CD8-positive, alpha-beta memory T cell (primary cell): ENCODE measurements at regions of chr1 and their contacts with region 1.

Region 1: GRCh38 chr1:16078925-16079656 is 5.6 kb upstream of the FAM131C start:
- DNase-seq: peak; percentile 63 to 81 (median 70)
- H3K4me3 ChIP-seq: peak overlapping the region; percentile 35
- H3K4me3 Mint-ChIP-seq: peak overlapping the region; percentile 75 to 89 (median 82)
- H3K27ac ChIP-seq: no peak overlapping the region
- H3K27ac Mint-ChIP-seq: peak overlapping the region; percentile 76 to 94 (median 88)
- H3K4me1 ChIP-seq: peaks cover 14% of the 10 kb centered on the region
- H3K4me1 Mint-ChIP-seq: peaks cover 11 to 17% (median 15%) of the 10 kb centered on the region in 3 donors
- H3K27me3 ChIP-seq: peaks cover 3% of the 10 kb centered on the region
- H3K27me3 Mint-ChIP-seq: peaks cover 3 to 9% of the 10 kb centered on the region in 2 donors

Region 2: DNA sequence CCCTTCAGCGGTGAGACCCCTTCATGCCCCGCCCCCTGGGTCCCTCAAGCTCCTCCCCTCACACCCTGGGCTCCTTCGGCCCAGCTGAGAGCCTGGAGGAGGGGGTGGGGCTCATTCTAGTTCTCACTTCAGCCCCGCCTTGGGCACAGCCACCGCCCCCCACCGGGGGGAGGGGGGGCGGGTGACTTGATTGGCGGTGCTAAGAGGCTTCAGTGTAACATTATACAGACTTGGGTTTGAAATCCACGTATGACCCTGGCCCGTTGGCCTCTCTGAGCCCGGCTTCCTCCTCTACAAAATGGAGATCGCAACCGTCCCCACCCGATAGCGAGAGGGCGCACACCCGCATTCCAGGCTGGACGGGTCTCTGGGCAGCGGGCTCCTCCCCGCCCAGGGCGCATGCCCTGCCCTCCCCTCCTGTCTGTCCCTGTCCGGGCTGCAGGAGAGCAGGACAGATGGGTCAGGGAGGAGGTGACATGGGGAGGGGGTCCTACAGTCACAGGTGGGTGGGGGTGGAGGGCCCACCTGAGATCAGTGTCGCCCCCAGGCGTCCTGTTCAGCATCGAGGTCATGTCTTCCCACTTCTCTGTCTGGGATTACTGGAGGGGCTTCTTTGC is 30.4 kb before region 1 on chr1:
- CTCF ChIA-PET with region 1: no interaction called
- POLR2A ChIA-PET with region 1: no interaction called
- DNase-seq: peak in 2 of 5 donors; percentile 26 to 35
- H3K4me3 ChIP-seq: peak overlapping the region; percentile 32
- H3K4me3 Mint-ChIP-seq: peak overlapping the region in 2 of 7 donors; percentile 31 to 47
- H3K27ac ChIP-seq: peak overlapping the region; percentile 20
- H3K27ac Mint-ChIP-seq: no peak overlapping the region
- H3K4me1 ChIP-seq: no peaks in the 10 kb centered on the region
- H3K4me1 Mint-ChIP-seq: peaks cover 2 to 5% (median 3%) of the 10 kb centered on the region in 3 donors
- H3K27me3 ChIP-seq: no peaks in the 10 kb centered on the region
- H3K27me3 Mint-ChIP-seq: peaks cover 5 to 36% of the 10 kb centered on the region in 2 donors

Region 3: GRCh38 chr1:16187748-16188401 is 108.8 kb after region 1 on chr1:
- CTCF ChIA-PET with region 1: interaction called, 196 read pairs
- POLR2A ChIA-PET with region 1: interaction called, 4 read pairs
- DNase-seq: peak; percentile 68 to 79 (median 72)
- H3K4me3 ChIP-seq: no peak overlapping the region
- H3K4me3 Mint-ChIP-seq: no peak overlapping the region
- H3K27ac ChIP-seq: no peak overlapping the region
- H3K27ac Mint-ChIP-seq: peak overlapping the region in 2 of 8 donors; percentile 36 to 51
- H3K4me1 ChIP-seq: no peaks in the 10 kb centered on the region
- H3K4me1 Mint-ChIP-seq: peaks cover 0 to 5% (median 4%) of the 10 kb centered on the region in 3 donors
- H3K27me3 ChIP-seq: no peaks in the 10 kb centered on the region
- H3K27me3 Mint-ChIP-seq: peaks cover 3 to 13% of the 10 kb centered on the region in 2 donors

Region 4: GRCh38 chr1:16206547-16207317 is 127.6 kb after region 1 on chr1:
- CTCF ChIA-PET with region 1: interaction called, 15 read pairs
- POLR2A ChIA-PET with region 1: no interaction called
- DNase-seq: peak; percentile 89 to 95 (median 93)
- H3K4me3 ChIP-seq: peak overlapping the region; percentile 77
- H3K4me3 Mint-ChIP-seq: peak overlapping the region; percentile 89 to 96 (median 93)
- H3K27ac ChIP-seq: peak overlapping the region; percentile 85
- H3K27ac Mint-ChIP-seq: peak overlapping the region; percentile 93 to 99 (median 96)
- H3K4me1 ChIP-seq: peaks cover 16% of the 10 kb centered on the region
- H3K4me1 Mint-ChIP-seq: peaks cover 15 to 17% (median 16%) of the 10 kb centered on the region in 3 donors
- H3K27me3 ChIP-seq: no peaks in the 10 kb centered on the region
- H3K27me3 Mint-ChIP-seq: peaks cover 0 to 2% of the 10 kb centered on the region in 2 donors

Region 5: DNA sequence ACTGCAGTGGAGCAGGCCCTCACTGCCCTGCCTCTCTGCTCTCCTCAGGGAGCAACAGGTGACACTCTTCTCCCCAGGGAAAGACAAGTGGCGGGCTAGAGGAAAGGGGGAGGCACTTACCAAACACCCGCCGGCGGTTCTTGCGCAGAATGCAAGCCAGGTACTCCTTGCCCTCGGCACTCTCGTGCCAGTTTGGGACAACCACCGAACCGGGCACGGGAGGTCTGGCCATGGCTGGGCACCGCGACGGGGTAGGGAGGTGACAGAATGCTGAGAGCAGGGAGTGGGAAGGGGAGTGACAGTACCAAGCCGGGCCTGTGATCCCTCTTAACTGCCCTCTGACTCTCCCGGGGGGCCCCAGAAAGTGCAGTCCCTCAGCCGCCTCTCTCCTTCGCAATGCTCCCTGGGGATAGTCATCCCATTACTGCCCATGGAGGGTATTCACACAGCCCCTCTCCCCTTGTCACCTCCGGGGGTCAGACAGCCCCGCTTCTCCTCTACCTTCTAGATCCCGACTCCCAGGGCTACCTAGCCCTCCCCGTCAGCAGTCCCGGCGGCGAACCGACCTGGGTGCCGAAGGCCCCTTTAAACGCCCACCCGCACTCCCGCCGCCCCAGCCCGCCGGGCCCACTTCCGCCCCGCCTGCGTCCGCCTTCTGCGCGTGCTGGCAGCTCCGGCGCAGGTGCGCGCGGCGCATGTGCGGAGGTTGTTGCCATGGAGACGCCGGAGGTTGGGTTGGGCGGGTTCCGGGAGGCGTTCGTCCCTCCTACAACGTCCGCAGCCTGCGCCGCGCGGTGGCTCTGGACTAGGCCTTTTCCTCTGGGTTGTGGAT is 157.6 kb after region 1 on chr1 and contains the start of gene CPLANE2:
- CTCF ChIA-PET with region 1: interaction called, 12 read pairs
- POLR2A ChIA-PET with region 1: no interaction called
- DNase-seq: peak; percentile 93 to 98 (median 96)
- H3K4me3 ChIP-seq: peak within 1 kb of the TSS; percentile 98
- H3K4me3 Mint-ChIP-seq: peak within 1 kb of the TSS; percentile 87 to 96 (median 90)
- H3K27ac ChIP-seq: peak within 1 kb of the TSS; percentile 88
- H3K27ac Mint-ChIP-seq: peak within 1 kb of the TSS; percentile 91 to 99 (median 98)
- H3K4me1 ChIP-seq: peaks cover 24% of the 10 kb centered on the region
- H3K4me1 Mint-ChIP-seq: peaks cover 17 to 31% (median 25%) of the 10 kb centered on the region in 3 donors
- H3K27me3 ChIP-seq: no peaks in the 10 kb centered on the region
- H3K27me3 Mint-ChIP-seq: peaks cover 0 to 2% of the 10 kb centered on the region in 2 donors
- total RNA-seq, gene CPLANE2: 5.2 to 5.6 TPM

Region 6: DNA sequence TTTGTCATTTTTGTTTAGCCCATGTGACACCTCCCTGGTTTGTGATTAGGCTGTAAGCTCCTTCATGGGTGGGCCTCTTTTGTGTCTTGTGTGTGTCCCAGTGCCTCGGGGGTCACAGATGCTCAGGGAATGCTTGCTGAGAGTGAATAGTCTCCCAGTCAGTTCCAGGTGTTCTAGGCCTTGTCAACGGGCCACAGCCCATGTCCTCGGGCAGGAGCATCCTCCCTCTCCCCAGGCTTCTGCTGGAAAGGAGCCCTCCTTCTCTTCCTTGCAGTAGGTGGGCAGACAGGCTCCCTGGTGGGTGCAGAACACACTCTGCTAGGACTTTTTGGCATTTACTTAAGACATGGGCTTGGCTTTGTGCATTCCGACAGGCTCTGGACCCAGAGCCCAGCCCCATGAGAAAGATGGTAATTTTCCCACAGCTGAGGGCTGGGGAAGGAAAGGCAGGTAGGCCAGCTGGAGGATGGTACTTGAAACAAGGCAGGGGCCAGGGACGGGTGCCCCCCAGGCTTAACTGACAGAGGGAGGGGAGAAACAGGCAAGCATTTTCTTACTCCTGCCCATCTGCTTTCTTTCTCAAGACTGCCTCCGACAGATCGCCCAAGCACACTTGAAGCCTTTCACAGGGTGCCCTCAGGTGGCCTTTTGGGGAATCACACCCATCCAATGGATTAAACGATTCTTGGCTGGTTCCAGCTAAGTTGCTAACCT is 165.0 kb after region 1 on chr1:
- CTCF ChIA-PET with region 1: interaction called, 17 read pairs
- POLR2A ChIA-PET with region 1: no interaction called
- DNase-seq: peak; percentile 53 to 81 (median 57)
- H3K4me3 ChIP-seq: no peak overlapping the region
- H3K4me3 Mint-ChIP-seq: peak overlapping the region in 1 of 7 donors; percentile 13
- H3K27ac ChIP-seq: no peak overlapping the region
- H3K27ac Mint-ChIP-seq: peak overlapping the region in 7 of 8 donors; percentile 7 to 92 (median 70)
- H3K4me1 ChIP-seq: peaks cover 7% of the 10 kb centered on the region
- H3K4me1 Mint-ChIP-seq: peaks cover 3 to 11% (median 11%) of the 10 kb centered on the region in 3 donors
- H3K27me3 ChIP-seq: no peaks in the 10 kb centered on the region
- H3K27me3 Mint-ChIP-seq: no peaks in the 10 kb centered on the region

Region 7: DNA sequence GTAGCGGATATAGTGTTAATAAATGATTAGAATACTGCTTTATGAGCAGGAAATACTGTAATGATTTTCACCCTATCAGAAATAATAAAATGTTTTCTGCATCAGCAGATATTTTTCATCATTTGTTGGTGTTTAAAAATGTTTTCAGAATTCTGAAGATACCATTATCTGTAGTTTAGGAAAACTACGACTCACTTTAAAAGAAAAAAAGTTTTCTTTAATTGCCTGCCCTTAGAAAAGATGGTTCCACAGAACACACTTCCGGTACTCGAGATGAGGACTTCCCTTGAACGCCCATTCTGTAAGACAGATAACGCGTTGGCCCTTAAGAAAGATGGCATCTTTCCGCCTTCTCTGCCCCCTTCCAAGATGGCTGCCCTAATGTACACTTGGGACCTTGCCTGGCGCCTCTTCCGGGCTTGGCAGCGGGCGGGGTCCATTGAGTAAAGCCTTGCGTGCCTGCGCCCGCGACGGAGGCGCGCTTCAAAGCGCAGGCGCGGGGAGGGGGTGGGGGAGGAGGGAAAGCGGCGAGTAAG is 287.7 kb after region 1 on chr1 and contains the start of gene SZRD1:
- CTCF ChIA-PET with region 1: interaction called, 10 read pairs
- POLR2A ChIA-PET with region 1: no interaction called
- DNase-seq: peak; percentile 94 to 98 (median 95)
- H3K4me3 ChIP-seq: peak within 1 kb of the TSS; percentile 98
- H3K4me3 Mint-ChIP-seq: peak within 1 kb of the TSS; percentile 86 to 99 (median 98)
- H3K27ac ChIP-seq: peak within 1 kb of the TSS; percentile 99
- H3K27ac Mint-ChIP-seq: peak within 1 kb of the TSS; percentile 99 to 100 (median 99)
- H3K4me1 ChIP-seq: peaks cover 35% of the 10 kb centered on the region
- H3K4me1 Mint-ChIP-seq: peaks cover 32 to 42% (median 42%) of the 10 kb centered on the region in 3 donors
- H3K27me3 ChIP-seq: no peaks in the 10 kb centered on the region
- H3K27me3 Mint-ChIP-seq: no peaks in the 10 kb centered on the region
- total RNA-seq, gene SZRD1: 208 to 216 TPM